H1 (cell line): ENCODE measurements at regions of chr2 and their contacts with region 1.

Region 1: DNA sequence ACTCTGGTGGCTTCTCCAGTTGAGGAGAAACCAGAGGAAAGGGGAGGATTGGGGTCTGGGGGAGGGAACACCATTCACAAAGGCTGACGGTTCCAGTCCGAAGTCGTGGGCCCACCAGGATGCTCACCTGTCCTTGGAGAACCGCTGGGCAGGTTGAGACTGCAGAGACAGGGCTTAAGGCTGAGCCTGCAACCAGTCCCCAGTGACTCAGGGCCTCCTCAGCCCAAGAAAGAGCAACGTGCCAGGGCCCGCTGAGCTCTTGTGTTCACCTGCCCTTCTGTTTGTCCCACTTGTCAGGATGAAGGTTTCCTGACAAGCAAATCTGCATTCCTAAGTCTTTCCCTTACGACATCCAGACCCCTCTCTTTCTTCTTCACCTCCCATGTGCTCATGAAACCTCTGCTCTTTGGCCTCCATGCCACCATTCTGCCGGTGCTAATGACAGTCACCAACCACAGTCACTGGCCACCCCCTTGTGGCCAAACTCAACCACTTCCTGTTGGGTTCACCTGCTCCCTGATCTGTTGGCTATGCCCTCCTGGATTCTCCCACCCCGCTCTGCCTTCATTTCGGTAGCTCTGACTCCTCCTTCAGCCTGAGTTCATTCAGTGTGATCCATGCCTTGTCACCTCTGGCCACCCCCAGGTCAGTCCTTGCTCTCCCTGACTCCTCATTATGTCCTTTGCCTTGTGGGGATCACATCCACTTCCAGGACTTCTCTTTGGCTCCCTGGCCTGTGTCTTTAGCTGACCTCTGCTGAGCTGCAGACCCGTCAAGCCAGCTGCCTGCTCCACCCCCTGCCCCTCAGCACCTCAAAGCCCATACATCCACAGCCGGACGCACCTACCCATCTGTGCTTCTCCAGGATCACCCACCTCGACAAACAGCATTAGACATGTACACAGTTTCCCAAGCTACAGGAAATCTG is 17.6 kb downstream of the EMX1 start:
- DNase-seq: no peak
- H3K4me3 ChIP-seq: no peak overlapping the region
- H3K27ac ChIP-seq: no peak overlapping the region
- H3K4me1 ChIP-seq: peaks cover 0 to 16% (median 9%) of the 10 kb centered on the region in 4 experiments; a peak in 5 of 7 replicates
- H3K27me3 ChIP-seq: peaks cover 0 to 19% (median 10%) of the 10 kb centered on the region in 4 experiments; a peak in 3 of 7 replicates
- CTCF ChIP-seq: peak in 2 of 3 experiments; percentile 77 to 79; a peak in 3 of 4 replicates
- EP300 ChIP-seq: no peak
- POLR2A ChIP-seq: no peak
- RAD21 ChIP-seq: peak; percentile 79 to 80

Region 2: DNA sequence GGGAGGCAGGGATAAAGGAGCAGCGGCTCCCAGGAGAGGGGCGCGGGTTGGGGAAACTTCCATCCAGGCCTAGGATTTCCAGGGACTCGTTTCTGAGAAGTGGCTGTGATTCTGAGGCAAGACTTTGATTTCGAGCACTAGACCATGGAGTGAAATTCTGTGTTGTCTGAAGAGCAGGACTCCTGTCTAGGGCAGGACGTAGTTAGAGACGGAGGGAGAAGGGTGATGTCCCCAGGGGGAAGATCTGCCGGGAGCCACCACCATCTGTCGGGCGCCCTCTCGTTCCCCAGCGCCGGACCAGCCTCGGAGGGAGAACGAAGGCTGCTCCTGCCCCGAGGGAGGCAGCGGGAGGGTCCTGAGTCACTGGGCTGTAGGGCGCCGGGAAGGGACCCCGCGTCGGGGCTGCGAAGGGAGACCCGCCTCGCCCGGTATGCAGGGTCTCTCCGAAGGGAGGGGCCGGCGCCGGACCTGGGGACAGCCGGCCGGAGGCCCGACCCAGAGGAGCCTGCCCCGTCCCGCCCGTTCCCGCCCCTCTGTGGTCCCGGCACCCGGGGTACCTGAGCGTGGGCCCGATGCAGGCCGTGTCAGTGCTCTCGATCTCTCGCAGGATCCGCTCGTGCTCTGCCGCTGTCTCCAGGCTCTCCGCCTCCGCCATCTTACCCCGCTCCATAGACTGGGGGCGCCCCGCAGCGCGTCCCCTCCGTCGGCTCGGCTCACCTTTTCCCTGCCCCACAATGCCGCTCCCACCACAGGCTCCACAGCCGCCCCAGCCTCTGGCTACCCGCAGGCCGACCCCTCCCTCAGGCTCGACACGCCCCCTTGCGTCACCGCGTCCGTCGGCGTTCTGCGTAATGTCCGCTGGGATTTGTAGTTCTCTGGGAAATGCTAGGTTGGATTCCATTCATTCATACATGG is 109.4 kb before region 1 on chr2 and contains the start of gene EXOC6B:
- CTCF ChIA-PET with region 1: no interaction called
- POLR2A ChIA-PET with region 1: no interaction called
- DNase-seq: peak; percentile 86 to 99
- H3K4me3 ChIP-seq: peak within 1 kb of the TSS; percentile 74 to 94 (median 88)
- H3K27ac ChIP-seq: peak within 1 kb of the TSS; percentile 90
- H3K4me1 ChIP-seq: peaks cover 0 to 6% (median 6%) of the 10 kb centered on the region in 4 experiments; a peak in 3 of 7 replicates
- H3K27me3 ChIP-seq: no peaks in the 10 kb centered on the region
- CTCF ChIP-seq: no peak
- EP300 ChIP-seq: no peak
- POLR2A ChIP-seq: peak; percentile 79 to 96
- RAD21 ChIP-seq: no peak
- total RNA-seq, gene EXOC6B: 30.1 and 33.0 TPM in 2 replicates

Region 3: GRCh38 chr2:72924353-72925240 is 10.3 kb before region 1 on chr2:
- CTCF ChIA-PET with region 1: interaction called, 76 read pairs
- POLR2A ChIA-PET with region 1: interaction called, 8 read pairs
- DNase-seq: peak in 1 of 2 experiments; percentile 81
- H3K4me3 ChIP-seq: peak overlapping the region in 3 of 4 experiments; percentile 19 to 54 (median 21); a peak in 6 of 8 replicates
- H3K27ac ChIP-seq: no peak overlapping the region
- H3K4me1 ChIP-seq: peaks cover 6 to 37% (median 18%) of the 10 kb centered on the region in 4 experiments
- H3K27me3 ChIP-seq: peaks cover 89 to 100% (median 97%) of the 10 kb centered on the region in 4 experiments
- CTCF ChIP-seq: no peak
- EP300 ChIP-seq: no peak
- POLR2A ChIP-seq: no peak
- RAD21 ChIP-seq: no peak; a peak in 1 of 4 replicates

Region 4: DNA sequence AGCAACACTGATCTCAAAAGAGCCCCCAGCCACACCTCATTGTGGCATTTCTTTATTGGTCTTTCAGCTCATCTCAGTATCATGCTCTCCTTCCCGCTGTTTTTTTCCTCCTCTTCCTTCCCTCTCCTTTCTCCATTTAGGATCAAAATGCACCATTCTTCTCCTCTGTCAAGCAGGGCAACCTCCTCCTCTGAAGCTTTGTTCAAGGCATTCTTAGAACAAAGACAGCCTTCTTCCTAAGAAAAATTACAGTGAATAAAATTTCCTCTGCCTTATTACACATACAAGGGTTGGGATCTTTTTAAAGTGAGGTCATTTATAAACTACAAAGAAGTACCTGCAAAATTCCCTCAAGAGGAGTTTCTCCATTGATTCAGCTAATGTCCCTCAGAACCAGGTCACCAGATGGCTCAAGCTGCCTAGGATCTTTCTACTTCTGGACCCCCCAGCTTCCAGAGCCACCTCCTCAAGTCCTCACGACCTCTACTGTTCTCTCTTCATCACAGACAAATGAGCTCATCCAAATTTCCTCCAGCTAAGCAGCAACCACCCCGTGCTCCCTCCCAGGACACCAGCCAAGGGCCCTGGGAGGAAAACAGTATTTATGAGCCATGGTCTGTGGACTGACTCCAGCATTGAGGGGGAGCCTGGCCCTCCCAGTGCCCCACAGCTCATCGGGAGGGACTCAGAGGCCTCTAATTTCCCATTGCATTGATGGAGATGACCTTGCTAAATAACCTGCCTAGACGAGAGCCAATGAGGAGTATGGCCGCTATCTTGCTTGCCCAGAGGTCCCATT is 118.6 kb after region 1 on chr2:
- CTCF ChIA-PET with region 1: no interaction called
- POLR2A ChIA-PET with region 1: no interaction called
- DNase-seq: no peak
- H3K4me3 ChIP-seq: no peak overlapping the region
- H3K27ac ChIP-seq: no peak overlapping the region
- H3K4me1 ChIP-seq: peaks cover 0 to 7% (median 3%) of the 10 kb centered on the region in 4 experiments; a peak in 4 of 7 replicates
- H3K27me3 ChIP-seq: no peaks in the 10 kb centered on the region
- CTCF ChIP-seq: no peak
- EP300 ChIP-seq: no peak
- POLR2A ChIP-seq: no peak
- RAD21 ChIP-seq: no peak